ENCODE measurements at regions of chr19 and their contacts with region 1.

Region 1: GRCh38 chr19:768424-768823 is 17.5 kb downstream of the MISP start:
- DNase-seq: no peak
- CTCF ChIP-seq: no peak

Region 2: DNA sequence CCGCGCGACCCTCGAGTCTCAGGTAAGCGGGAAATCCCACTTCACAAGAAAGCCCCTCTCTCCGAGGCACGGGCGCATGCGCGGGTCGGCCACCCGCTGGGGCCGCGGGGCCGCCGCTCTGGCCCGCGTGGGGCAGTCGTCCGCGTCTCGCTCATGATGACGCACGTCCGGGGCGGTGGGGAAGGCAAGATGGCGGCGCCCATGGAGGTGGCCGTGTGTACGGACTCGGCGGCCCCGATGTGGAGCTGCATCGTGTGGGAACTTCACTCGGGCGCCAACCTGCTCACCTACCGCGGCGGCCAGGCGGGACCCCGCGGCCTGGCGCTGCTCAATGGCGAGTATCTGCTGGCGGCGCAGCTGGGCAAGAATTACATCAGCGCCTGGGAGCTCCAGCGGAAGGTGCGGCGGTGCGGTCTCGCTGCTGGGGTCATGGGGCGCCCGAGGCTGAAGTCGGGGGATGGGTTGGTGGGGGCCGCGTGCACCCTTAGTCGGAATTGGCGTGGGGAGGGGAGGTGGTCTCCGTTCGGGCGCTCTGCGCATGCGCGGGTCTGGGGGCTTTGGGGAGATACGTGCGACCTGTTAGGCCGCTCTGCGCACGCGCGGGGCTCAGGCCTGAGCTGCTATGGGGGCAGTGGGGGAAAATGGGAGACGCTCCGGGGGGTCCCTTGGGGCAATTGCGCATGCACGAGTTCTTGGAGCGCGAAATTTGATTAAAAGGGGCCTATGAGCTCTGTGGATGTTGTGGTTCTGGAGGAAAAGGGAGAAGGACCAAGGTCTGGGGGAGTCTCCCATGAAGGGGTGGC is 215.9 kb after region 1 on chr19 and contains the start of gene WDR18:
- in situ Hi-C with region 1: loop called (anchors 10 kb)
- DNase-seq: peak; percentile 100
- CTCF ChIP-seq: peak; percentile 5

Measured in GM13976 (cell line).